GM12878 (cell line): ENCODE measurements at regions of chr2 and their contacts with region 1.

Region 1: DNA sequence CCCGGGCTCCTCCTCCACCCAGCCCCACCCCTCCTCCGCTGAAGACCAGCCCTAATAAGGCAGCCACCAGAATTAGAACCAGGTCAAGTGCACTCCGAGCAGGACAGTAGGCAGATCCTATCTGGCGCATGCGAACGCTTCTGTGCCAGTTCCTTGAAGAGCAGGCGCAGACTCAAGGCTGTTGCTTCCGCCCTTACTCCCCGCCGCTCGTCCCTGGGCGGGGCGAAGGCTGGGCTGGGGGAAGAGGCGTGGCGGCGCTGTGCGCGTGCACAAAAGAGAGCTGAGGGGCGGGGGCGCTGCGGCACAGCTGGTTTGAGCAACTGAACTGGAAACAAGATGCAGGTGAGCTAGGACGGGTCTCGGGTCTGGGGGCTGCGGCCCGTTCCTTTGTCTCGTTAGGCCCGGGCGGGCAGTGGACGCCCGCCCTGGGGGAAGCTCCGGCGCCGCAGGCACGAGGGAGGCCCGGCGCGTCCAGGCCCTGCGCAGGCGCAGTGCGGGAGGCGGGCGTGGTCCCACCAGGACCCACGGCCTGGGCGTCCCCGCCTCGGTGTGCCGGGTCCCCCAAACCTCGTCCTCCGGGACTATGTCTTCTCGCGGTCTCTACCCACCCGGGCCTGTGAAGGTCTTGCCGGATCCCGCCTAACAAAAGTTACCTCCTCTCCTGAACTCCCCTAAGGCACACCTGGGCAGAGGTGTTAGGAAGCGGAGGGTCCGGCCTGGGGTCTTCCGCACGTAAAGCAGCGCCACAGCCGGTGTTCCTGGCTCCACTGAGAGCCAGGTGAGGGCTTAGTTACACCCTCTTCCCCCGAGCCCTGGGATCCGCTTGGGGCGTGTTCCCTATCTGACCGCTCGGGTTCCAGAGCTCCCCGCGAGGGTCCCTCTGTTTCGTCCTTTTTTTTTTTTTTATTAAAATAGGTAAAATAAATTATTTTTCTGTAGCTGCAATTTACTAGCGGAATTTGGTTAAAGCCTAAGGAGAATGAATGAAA is at the start of gene PDCL3:
- DNase-seq: peak; percentile 98
- ATAC-seq: peak; percentile 97
- H3K4me3 ChIP-seq: peak within 1 kb of the TSS; percentile 88
- H3K27ac ChIP-seq: peak within 1 kb of the TSS; percentile 92
- H3K4me1 ChIP-seq: peaks cover 4% of the 10 kb centered on the region
- H3K27me3 ChIP-seq: no peaks in the 10 kb centered on the region
- CTCF ChIP-seq: peak in 2 of 3 experiments; percentile 12 to 20; a peak in 2 of 6 replicates
- EP300 ChIP-seq: no peak
- POLR2A ChIP-seq: peak; percentile 81
- RAD21 ChIP-seq: no peak
- polyA plus RNA-seq, gene PDCL3: 109 to 111 TPM

Region 2: GRCh38 chr2:100281521-100282438 is 281.2 kb before region 1 on chr2:
- CTCF ChIA-PET with region 1: no interaction called
- POLR2A ChIA-PET with region 1: no interaction called
- RAD21 ChIA-PET with region 1: no interaction called
- SMC1A ChIA-PET with region 1: no interaction called
- in situ Hi-C with region 1: no loop called
- intact Hi-C with region 1: no loop called
- DNase-seq: no peak
- ATAC-seq: no peak
- H3K4me3 ChIP-seq: no peak overlapping the region
- H3K27ac ChIP-seq: no peak overlapping the region
- H3K4me1 ChIP-seq: no peaks in the 10 kb centered on the region
- H3K27me3 ChIP-seq: no peaks in the 10 kb centered on the region; a peak in 1 of 4 replicates
- CTCF ChIP-seq: no peak
- EP300 ChIP-seq: no peak
- POLR2A ChIP-seq: no peak
- RAD21 ChIP-seq: no peak

Region 3: DNA sequence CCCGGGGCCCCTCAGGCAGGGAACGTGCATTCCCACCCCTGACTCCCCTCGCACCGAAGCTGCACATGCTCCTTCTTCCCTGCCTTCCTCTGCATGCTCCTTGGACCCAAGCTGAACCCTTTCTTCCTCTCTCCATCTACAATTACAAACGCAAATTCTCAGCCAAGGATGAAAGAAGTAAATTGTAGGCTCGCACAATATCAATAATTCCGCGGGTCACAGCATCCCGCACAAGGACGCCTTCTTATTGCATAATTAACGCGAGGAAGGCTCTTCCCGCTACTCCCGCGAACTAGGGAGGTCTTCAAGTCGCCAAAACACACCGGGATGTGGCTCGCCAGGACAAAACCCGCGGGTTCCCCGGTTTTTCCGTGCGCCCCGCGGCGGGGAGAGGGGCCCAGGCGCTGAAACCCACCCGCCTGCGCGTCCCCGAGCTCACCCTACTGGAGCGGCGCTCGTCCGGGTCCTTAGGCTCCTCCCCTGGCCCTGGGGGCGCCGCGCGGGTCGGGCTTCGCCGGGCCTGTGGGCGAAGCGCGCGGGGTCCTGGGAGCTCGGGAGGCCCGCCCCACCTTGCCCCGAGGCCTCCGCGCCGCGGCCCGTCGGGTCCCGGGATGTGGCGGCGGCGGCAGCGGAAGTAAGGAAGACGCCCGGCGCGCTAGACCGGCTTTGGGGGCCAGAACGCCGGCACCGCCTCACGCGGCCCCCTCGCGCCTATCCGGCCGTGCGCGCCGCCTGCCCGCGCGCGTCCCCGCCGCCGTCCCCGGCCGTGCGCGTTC is 145.9 kb before region 1 on chr2 and contains the start of gene CHST10:
- CTCF ChIA-PET with region 1: interaction called, 6 read pairs
- POLR2A ChIA-PET with region 1: interaction called, 3 read pairs
- RAD21 ChIA-PET with region 1: no interaction called
- SMC1A ChIA-PET with region 1: interaction called, 3 read pairs
- in situ Hi-C with region 1: no loop called
- intact Hi-C with region 1: loop called (anchors 2 kb)
- DNase-seq: no peak
- ATAC-seq: peak; percentile 93
- H3K4me3 ChIP-seq: peak within 1 kb of the TSS; percentile 96
- H3K27ac ChIP-seq: peak within 1 kb of the TSS; percentile 47
- H3K4me1 ChIP-seq: peaks cover 3% of the 10 kb centered on the region; the same call in 1 of the 2 replicates
- H3K27me3 ChIP-seq: no peaks in the 10 kb centered on the region
- CTCF ChIP-seq: 0 out of 6 replicates have a peak, but pooled peaks of 1 of the 3 experiments have one; percentile 3
- EP300 ChIP-seq: no peak
- POLR2A ChIP-seq: peak; percentile 75
- RAD21 ChIP-seq: no peak
- polyA plus RNA-seq, gene CHST10: 2.0 to 2.4 TPM

Region 4: GRCh38 chr2:100580367-100581276 is 17.6 kb after region 1 on chr2:
- CTCF ChIA-PET with region 1: interaction called, 5 read pairs
- POLR2A ChIA-PET with region 1: interaction called, 11 read pairs
- RAD21 ChIA-PET with region 1: interaction called, 6 read pairs
- SMC1A ChIA-PET with region 1: interaction called, 8 read pairs
- in situ Hi-C with region 1: no loop called
- intact Hi-C with region 1: loop called (anchors 2 kb)
- DNase-seq: peak; percentile 48
- ATAC-seq: peak; percentile 87
- H3K4me3 ChIP-seq: peak overlapping the region; percentile 7; the same call in 1 of the 2 replicates
- H3K27ac ChIP-seq: peak overlapping the region; percentile 76
- H3K4me1 ChIP-seq: peaks cover 10% of the 10 kb centered on the region
- H3K27me3 ChIP-seq: no peaks in the 10 kb centered on the region
- CTCF ChIP-seq: no peak
- EP300 ChIP-seq: no peak
- POLR2A ChIP-seq: peak; percentile 37; the same call in 1 of the 2 replicates
- RAD21 ChIP-seq: peak; percentile 19; the same call in 1 of the 2 replicates